CD8-positive, alpha-beta T cell (primary cell): ENCODE measurements at regions of chr19 and their contacts with region 1.

Region 1: DNA sequence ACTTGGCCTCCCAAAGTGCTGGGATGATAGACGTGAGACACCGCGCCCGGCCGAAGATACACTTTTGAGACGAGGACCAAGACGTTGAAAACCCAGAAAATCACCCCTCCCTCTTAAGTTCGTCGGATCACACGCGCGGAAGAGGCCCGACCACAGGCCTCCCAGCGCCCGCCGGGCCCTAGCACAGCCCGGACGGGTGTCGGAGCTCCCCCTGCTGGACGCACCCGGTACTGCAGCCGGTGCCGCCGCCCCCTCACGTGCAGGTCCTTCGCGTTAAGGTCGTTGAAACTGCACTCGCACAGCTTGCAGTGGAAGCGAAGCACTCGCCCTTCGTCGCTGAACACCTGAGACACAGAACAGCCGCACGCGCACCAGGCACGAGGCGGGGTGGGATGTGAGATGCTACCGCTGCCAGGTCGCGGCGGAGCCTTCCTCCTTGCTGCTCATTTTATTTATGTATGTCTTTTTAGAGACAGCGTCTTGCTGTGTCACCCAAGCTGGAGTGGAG is 35.7 kb upstream of the MATK start:
- DNase-seq: peak; percentile 84 to 98 (median 87)
- ATAC-seq: peak; percentile 99
- H3K4me3 ChIP-seq: peak overlapping the region in 1 of 2 experiments; percentile 30
- H3K4me3 Mint-ChIP-seq: peak overlapping the region; percentile 35
- H3K27ac ChIP-seq: no peak overlapping the region
- H3K27ac Mint-ChIP-seq: peak overlapping the region; percentile 64
- H3K4me1 ChIP-seq: peaks cover 32% of the 10 kb centered on the region
- H3K4me1 Mint-ChIP-seq: peaks cover 17% of the 10 kb centered on the region
- H3K27me3 ChIP-seq: no peaks in the 10 kb centered on the region
- H3K27me3 Mint-ChIP-seq: no peaks in the 10 kb centered on the region
- CTCF ChIP-seq: peak; percentile 98

Region 2: DNA sequence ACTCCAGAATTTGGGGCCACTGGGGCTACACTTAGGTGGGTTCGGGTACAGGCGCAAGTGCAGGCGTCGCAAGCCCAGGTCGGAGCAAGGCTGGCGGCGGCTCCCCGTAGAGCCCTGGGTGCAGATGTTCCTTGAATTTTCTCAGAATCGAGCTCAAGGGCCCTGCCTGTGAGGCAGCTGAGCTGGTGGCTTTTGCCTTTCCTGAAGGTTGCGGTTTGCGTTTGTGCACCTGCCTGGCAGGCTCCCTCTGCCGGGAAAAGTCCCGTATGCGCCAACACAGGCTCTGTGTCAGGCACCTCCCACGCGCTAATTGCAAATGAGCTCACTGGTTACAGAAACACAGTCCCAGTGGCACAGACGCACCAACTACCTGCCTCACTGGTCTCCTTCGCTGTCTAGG is 327.4 kb before region 1 on chr19:
- CTCF ChIA-PET with region 1: no interaction called
- POLR2A ChIA-PET with region 1: no interaction called
- intact Hi-C with region 1: no loop called
- DNase-seq: peak in 1 of 9 experiments; percentile 54
- ATAC-seq: peak; percentile 46
- H3K4me3 ChIP-seq: no peak overlapping the region
- H3K4me3 Mint-ChIP-seq: no peak overlapping the region
- H3K27ac ChIP-seq: no peak overlapping the region
- H3K27ac Mint-ChIP-seq: peak overlapping the region; percentile 55
- H3K4me1 ChIP-seq: peaks cover under 1% of the 10 kb centered on the region
- H3K4me1 Mint-ChIP-seq: peaks cover 18% of the 10 kb centered on the region
- H3K27me3 ChIP-seq: no peaks in the 10 kb centered on the region
- H3K27me3 Mint-ChIP-seq: no peaks in the 10 kb centered on the region
- CTCF ChIP-seq: no peak

Region 3: DNA sequence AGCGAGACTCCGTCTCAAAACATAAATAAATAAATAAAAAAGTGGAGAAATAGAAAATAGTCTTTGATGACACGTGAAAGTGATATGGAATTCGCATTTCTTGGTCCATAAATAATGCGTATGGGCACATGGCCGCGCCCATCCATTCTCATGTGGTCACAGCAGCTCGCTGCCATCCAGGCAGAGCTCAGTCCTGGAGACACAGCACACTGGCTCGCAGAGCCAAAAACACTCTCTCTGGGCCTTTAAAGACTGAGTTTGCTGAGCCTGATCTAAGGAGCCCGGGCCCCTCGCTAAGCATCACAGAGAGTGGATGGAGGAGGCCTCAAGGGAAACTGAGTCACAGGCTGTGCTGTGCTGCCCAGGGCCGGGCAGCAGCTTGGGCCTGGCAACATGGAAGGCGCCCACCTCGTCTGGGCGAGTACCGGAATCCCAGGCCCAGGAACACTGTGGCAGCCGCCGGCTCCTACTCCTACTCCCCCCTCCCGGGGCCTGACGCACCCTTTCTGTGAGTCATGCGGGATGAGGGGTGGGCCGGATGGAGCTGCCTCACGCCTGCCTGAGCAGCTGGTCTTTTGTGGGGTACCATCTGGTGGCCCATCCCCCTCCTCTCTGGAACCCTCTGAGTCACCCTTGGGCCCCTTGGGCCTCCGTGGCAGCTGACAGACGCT is 166.4 kb before region 1 on chr19:
- CTCF ChIA-PET with region 1: no interaction called
- POLR2A ChIA-PET with region 1: no interaction called
- intact Hi-C with region 1: no loop called
- DNase-seq: no peak
- ATAC-seq: no peak
- H3K4me3 ChIP-seq: no peak overlapping the region
- H3K4me3 Mint-ChIP-seq: no peak overlapping the region
- H3K27ac ChIP-seq: no peak overlapping the region
- H3K27ac Mint-ChIP-seq: no peak overlapping the region
- H3K4me1 ChIP-seq: no peaks in the 10 kb centered on the region
- H3K4me1 Mint-ChIP-seq: no peaks in the 10 kb centered on the region
- H3K27me3 ChIP-seq: no peaks in the 10 kb centered on the region
- H3K27me3 Mint-ChIP-seq: no peaks in the 10 kb centered on the region
- CTCF ChIP-seq: no peak

Region 4: DNA sequence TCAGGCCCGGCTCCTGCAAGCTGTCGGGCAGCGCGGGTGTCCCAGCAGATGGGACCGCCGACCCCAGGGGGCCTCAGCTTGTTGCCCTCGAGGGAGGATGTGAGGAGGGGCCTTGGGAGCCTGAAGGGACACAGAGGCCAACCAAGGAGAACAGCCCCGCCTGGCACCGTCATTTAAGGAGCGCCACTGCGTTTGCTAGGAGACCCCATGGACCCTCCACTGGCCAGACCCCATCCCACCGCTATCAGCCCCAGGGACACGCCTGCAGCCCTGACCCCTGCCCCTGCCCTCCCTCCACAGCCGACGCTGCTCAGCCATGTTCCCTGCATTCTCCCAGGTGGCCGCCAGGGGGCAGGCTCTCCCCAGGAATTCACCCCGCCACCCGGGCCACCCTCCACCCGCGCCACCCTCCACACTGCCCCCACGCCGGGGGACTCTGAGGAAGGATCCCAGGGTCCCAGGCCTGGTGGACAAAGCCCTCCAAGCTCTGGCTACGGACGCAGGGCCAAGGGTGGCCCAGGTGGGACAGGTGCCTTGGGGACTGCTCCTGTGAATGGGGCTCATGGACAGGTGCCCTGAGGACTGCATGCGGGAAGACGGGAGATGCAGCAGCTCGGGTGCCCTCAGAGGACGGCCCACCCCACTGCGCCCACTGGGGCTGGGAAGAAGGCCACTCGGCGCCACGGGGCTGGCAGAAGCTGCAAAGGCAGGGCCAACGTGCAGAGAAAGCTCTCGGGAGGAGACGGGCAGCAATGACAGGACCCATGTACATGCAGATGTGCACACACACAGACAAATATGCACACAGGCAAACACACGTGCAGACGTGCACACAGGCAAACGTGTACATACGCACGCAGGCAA is 156.0 kb before region 1 on chr19:
- CTCF ChIA-PET with region 1: interaction called, 17 read pairs
- POLR2A ChIA-PET with region 1: no interaction called
- intact Hi-C with region 1: loop called in 1 of 2 experiments (anchors 1 kb)
- DNase-seq: peak; percentile 56 to 91 (median 77)
- ATAC-seq: peak; percentile 98
- H3K4me3 ChIP-seq: no peak overlapping the region
- H3K4me3 Mint-ChIP-seq: no peak overlapping the region
- H3K27ac ChIP-seq: no peak overlapping the region
- H3K27ac Mint-ChIP-seq: no peak overlapping the region
- H3K4me1 ChIP-seq: peaks cover 11% of the 10 kb centered on the region
- H3K4me1 Mint-ChIP-seq: peaks cover 11% of the 10 kb centered on the region
- H3K27me3 ChIP-seq: no peaks in the 10 kb centered on the region
- H3K27me3 Mint-ChIP-seq: no peaks in the 10 kb centered on the region
- CTCF ChIP-seq: peak; percentile 85

Region 5: GRCh38 chr19:3710265-3710812 is 111.6 kb before region 1 on chr19:
- CTCF ChIA-PET with region 1: interaction called, 3 read pairs
- POLR2A ChIA-PET with region 1: no interaction called
- intact Hi-C with region 1: loop called in 1 of 2 experiments (anchors 5 kb)
- DNase-seq: peak in 1 of 9 experiments; percentile 37
- ATAC-seq: no peak
- H3K4me3 ChIP-seq: no peak overlapping the region
- H3K4me3 Mint-ChIP-seq: no peak overlapping the region
- H3K27ac ChIP-seq: no peak overlapping the region
- H3K27ac Mint-ChIP-seq: no peak overlapping the region
- H3K4me1 ChIP-seq: no peaks in the 10 kb centered on the region
- H3K4me1 Mint-ChIP-seq: peaks cover 6% of the 10 kb centered on the region
- H3K27me3 ChIP-seq: peaks cover 0 to 4% of the 10 kb centered on the region in 2 experiments
- H3K27me3 Mint-ChIP-seq: peaks cover 5% of the 10 kb centered on the region
- CTCF ChIP-seq: no peak

Region 6: DNA sequence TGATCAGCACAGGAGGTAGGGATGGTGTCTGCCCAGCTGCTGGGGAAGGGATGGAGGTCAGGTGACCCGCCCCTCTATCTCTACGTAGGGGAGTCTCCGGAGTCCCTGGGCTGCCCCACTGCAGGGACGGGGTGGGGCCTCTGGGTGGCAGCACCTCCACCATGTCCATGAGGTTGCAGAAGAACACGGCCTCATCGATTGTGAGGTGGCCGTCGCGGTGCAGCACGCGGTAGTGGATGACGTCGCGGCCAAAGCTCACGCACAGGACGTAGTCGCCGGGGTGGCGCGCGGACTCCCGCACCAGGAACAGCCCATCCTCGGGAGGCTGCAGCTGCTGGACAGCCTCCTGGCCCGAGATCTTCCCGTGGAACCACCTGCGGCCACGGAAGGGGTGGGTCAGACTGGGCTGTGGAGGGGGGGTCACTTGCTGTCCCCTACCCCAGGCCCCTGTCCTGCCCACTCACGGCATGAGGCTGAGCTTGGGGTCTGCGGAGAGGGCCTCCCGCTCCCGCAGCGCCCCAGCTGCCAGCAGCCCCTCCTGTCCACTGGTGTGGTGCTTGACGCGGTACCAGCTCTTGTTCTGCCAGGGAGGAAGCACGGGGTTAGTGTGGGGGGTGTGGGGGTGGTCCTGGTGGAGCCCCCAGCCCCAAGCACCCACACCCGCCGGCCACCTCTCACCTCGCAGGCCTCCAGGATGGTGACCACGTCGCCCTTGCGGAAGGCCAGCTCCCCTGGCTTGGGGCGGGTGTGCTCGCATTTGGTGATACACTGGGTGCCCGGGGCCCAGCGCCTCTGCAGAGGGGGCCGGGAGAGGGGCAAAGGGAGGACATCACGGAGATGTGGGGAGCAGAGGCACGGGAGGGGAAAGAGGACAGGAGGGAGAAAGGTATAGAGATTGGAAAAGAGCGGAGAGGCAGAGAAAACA is 38.0 kb before region 1 on chr19:
- CTCF ChIA-PET with region 1: interaction called, 24 read pairs
- POLR2A ChIA-PET with region 1: interaction called, 5 read pairs
- intact Hi-C with region 1: loop called (anchors 1 kb)
- DNase-seq: peak in 8 of 9 experiments; percentile 25 to 75 (median 64)
- ATAC-seq: peak; percentile 58
- H3K4me3 ChIP-seq: peak overlapping the region in 1 of 2 experiments; percentile 69
- H3K4me3 Mint-ChIP-seq: peak overlapping the region; percentile 83
- H3K27ac ChIP-seq: peak overlapping the region in 1 of 2 experiments; percentile 48
- H3K27ac Mint-ChIP-seq: peak overlapping the region; percentile 79
- H3K4me1 ChIP-seq: peaks cover 15% of the 10 kb centered on the region
- H3K4me1 Mint-ChIP-seq: peaks cover 22% of the 10 kb centered on the region
- H3K27me3 ChIP-seq: no peaks in the 10 kb centered on the region
- H3K27me3 Mint-ChIP-seq: no peaks in the 10 kb centered on the region
- CTCF ChIP-seq: peak; percentile 50

Region 7: GRCh38 chr19:3801412-3802096 is 20.4 kb before region 1 on chr19:
- CTCF ChIA-PET with region 1: interaction called, 19 read pairs
- POLR2A ChIA-PET with region 1: interaction called, 4 read pairs
- intact Hi-C with region 1: no loop called
- DNase-seq: peak; percentile 38 to 84 (median 66)
- ATAC-seq: peak; percentile 69
- H3K4me3 ChIP-seq: peak overlapping the region; percentile 39 to 60
- H3K4me3 Mint-ChIP-seq: peak overlapping the region; percentile 56
- H3K27ac ChIP-seq: no peak overlapping the region
- H3K27ac Mint-ChIP-seq: peak overlapping the region; percentile 22
- H3K4me1 ChIP-seq: peaks cover 49% of the 10 kb centered on the region
- H3K4me1 Mint-ChIP-seq: peaks cover 43% of the 10 kb centered on the region
- H3K27me3 ChIP-seq: no peaks in the 10 kb centered on the region
- H3K27me3 Mint-ChIP-seq: no peaks in the 10 kb centered on the region
- CTCF ChIP-seq: no peak

Region 8: DNA sequence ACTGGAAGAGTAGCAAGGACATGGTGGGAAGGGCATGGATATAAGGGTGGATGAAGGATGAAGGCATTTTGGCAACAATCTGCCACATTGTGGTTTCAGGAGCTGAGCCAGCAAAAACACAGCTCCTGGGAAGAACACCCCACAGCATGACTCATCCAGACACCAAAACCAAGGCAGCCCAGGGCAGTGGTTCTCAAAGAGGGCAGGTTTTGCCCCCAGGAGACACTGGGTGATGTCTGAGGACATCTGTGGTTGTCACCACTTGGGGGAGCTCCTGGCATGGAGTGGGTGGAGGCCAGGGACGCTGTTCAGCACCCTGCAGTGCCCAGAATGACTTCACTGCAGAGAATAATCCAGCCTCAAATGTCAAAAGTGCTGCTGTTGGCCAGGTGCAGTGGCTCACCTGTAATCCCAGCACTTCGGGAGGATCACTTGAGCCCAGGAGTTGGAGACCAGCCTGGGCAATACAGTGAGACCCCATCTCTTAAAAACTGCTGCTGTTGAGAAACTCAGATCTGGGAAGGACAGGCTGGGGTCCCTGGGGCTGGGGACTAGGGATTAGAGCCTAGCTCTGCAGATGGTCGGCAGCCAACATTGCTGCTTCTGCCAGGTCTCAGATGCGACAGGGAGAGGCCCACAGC is 30.8 kb after region 1 on chr19:
- CTCF ChIA-PET with region 1: interaction called, 12 read pairs
- POLR2A ChIA-PET with region 1: no interaction called
- intact Hi-C with region 1: no loop called
- DNase-seq: peak in 8 of 9 experiments; percentile 27 to 68 (median 54)
- ATAC-seq: peak; percentile 57
- H3K4me3 ChIP-seq: no peak overlapping the region
- H3K4me3 Mint-ChIP-seq: no peak overlapping the region
- H3K27ac ChIP-seq: no peak overlapping the region
- H3K27ac Mint-ChIP-seq: no peak overlapping the region
- H3K4me1 ChIP-seq: no peaks in the 10 kb centered on the region
- H3K4me1 Mint-ChIP-seq: no peaks in the 10 kb centered on the region
- H3K27me3 ChIP-seq: no peaks in the 10 kb centered on the region
- H3K27me3 Mint-ChIP-seq: no peaks in the 10 kb centered on the region
- CTCF ChIP-seq: peak; percentile 37